Activated T-helper 1 cell treated with anti-CD3 and anti-CD28 coated beads, Interleukin-12 subunit alpha, Interleukin-12 subunit beta, Interleukin-2, Interleukin-4 antibody, amounts not matched to agents 30 ng/mL and 10 ng/mL and 1 ng/mL, durations not matched to agents 14 hours and 24 hours and 36 hours (primary cell): ENCODE measurements at regions of chr19 and their contacts with region 1.

Region 1: GRCh38 chr19:44002566-44003460 is at the start of gene ZNF230:
- DNase-seq: peak; percentile 78
- H3K4me3 Mint-ChIP-seq: peak within 1 kb of the TSS; percentile 98
- H3K27ac Mint-ChIP-seq: peak within 1 kb of the TSS; percentile 95
- H3K4me1 Mint-ChIP-seq: peaks cover 21% of the 10 kb centered on the region
- H3K27me3 Mint-ChIP-seq: no peaks in the 10 kb centered on the region
- total RNA-seq, gene ZNF230: 4.0 and 4.3 TPM in 2 replicates

Region 2: DNA sequence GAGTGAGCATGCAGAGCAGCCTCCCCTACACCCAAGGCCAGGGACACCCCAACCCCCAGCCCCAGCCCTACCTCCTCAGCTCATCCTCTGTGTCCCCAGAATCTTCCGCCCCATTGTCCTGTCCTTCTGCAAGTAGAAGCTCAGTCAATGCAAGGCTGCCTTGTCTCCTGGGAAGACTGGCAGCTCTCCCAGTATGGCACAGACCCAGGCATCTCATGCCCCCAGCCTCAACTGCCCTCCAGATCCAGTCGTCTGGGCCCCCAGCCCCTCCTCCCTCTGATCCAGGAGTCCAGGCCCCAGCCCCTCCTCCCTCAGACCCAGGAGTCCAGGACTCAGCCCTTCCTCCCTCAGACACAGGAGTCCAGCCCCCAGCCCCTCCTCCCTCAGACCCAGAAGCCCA is 456.8 kb before region 1 on chr19:
- intact Hi-C with region 1: no loop called
- DNase-seq: no peak
- H3K4me3 Mint-ChIP-seq: no peak overlapping the region
- H3K27ac Mint-ChIP-seq: no peak overlapping the region
- H3K4me1 Mint-ChIP-seq: no peaks in the 10 kb centered on the region
- H3K27me3 Mint-ChIP-seq: no peaks in the 10 kb centered on the region

Region 3: DNA sequence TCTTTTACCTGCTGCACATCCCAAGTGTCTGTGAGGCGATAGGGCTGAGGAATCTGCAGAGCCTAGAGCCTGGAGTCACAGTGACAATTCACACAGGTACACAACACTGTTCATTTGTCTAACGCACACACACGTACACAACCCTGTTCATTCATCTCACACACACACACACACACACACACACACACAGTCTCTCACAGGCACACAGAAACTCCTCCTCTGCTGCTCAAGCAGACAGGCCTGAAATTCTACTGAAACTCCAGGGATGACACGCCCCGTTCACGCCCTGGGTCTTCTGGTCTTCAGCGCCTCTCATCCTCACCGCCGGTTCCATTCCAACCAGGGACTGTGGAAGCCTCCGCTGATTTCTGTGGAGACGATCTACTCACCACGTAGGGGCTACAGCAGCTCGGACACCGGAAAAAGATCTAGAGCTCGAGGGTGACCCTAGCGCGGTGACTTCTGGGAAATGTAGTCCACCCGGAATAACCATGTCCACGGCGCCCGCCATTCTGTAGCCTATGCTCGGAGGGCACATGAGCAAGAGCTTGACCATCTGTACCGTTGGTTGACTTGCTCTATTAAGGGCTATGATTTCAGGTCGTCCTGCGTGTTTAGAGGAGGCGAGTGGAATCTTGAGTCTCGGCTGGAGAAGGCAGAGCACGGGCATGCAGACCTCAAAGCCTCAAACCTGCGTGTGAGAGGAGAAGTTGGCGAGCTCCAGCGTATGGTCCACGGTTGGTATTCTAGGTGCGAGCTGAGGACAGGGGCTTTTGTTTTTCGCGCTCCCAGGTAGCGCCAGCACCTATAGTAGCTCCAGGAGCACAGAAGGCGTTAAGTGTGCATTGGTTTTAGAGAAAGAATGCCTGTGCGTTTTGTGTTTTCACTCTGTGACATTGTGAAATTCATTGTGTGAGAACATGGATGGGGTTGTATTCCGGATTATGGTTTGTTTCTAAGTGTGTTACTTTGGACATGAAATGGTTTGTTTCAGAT is 101.1 kb before region 1 on chr19:
- intact Hi-C with region 1: loop called (anchors 5 kb)
- DNase-seq: peak; percentile 54
- H3K4me3 Mint-ChIP-seq: peak overlapping the region; percentile 81
- H3K27ac Mint-ChIP-seq: peak overlapping the region; percentile 20
- H3K4me1 Mint-ChIP-seq: peaks cover 15% of the 10 kb centered on the region
- H3K27me3 Mint-ChIP-seq: no peaks in the 10 kb centered on the region

Region 4: DNA sequence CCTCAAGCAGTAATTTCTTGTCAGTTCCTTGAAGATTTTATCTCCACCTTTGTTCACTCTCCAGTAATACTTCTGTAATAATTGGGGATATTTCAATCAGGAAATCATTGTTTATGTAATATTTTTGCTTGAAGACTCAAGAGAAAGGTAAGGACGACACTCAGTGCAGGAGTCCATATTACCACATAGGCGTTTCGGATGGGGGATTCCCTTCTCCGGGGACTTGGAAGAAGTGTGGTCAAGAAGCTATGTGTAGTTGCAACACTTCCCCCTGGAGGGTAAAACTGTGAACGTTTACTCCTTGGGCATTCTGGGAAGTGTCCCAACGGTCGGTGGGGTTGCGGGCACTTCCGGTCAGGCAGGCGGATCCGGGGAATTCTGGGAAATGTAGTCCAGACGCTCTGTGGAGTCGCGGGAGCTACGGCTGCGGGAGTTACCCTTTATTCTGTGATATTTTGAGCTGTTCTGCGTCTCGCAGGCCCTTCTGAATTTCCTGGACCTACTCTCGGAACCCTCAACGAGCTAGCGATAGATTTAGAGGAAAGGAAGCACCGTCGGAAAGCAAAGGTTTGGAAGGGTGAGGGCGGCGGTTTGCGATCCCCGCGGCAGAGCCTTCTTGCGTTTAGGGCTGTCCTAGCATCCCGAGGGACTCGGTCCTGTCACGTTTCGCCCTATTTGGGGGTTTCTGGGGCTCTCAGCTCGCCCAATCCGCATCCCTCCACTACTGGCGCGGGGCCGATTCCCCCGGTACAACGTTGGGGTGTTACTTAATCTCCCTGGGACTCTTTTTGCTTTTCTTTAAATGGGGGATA is 51.8 kb before region 1 on chr19 and contains the start of gene ZNF221:
- intact Hi-C with region 1: loop called (anchors 1 kb)
- DNase-seq: peak; percentile 50
- H3K4me3 Mint-ChIP-seq: peak within 1 kb of the TSS; percentile 94
- H3K27ac Mint-ChIP-seq: peak within 1 kb of the TSS; percentile 66
- H3K4me1 Mint-ChIP-seq: peaks cover 11% of the 10 kb centered on the region
- H3K27me3 Mint-ChIP-seq: no peaks in the 10 kb centered on the region
- total RNA-seq, gene ZNF221: 0.56 and 0.75 TPM in 2 replicates

Region 5: DNA sequence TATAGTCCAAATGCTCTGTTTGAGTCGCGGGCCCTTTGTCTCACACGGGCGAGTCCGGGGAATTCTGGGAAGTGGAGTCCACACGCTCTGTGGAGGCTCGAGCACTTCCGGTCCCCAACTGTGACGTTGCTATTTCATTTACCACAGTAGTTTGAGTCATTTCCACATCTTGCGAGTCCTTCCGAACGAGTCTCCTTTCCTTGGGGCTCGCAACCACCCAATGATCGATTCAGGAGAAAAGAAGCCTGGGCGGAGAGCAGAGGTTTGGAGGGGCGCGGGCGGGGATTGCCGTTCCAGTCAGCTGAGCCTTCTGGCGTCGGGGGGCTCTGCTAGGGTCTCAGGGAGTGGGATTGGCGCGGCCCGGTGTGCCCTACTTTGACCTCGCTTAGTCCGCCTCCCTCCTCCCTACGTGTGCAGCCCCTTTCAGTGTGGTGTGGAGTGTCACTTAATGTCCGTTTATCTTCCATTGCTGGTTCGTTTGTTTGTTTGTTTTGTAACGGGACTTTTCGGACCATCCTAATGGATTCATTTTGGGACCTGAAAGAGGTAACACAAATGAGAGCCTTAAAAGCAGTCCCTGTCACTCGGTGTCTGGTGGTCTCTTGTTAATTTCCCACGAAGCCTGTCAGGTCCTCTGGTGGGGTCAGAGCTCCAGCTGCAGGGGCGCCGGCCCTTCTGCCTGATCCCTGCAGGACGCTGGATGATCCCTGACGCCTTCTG is 22.6 kb after region 1 on chr19 and contains the start of gene ZNF222:
- intact Hi-C with region 1: loop called (anchors 1 kb)
- DNase-seq: peak; percentile 69
- H3K4me3 Mint-ChIP-seq: peak within 1 kb of the TSS; percentile 96
- H3K27ac Mint-ChIP-seq: peak within 1 kb of the TSS; percentile 85
- H3K4me1 Mint-ChIP-seq: peaks cover 18% of the 10 kb centered on the region
- H3K27me3 Mint-ChIP-seq: no peaks in the 10 kb centered on the region
- total RNA-seq, gene ZNF222: 1.2 and 1.5 TPM in 2 replicates

Region 6: DNA sequence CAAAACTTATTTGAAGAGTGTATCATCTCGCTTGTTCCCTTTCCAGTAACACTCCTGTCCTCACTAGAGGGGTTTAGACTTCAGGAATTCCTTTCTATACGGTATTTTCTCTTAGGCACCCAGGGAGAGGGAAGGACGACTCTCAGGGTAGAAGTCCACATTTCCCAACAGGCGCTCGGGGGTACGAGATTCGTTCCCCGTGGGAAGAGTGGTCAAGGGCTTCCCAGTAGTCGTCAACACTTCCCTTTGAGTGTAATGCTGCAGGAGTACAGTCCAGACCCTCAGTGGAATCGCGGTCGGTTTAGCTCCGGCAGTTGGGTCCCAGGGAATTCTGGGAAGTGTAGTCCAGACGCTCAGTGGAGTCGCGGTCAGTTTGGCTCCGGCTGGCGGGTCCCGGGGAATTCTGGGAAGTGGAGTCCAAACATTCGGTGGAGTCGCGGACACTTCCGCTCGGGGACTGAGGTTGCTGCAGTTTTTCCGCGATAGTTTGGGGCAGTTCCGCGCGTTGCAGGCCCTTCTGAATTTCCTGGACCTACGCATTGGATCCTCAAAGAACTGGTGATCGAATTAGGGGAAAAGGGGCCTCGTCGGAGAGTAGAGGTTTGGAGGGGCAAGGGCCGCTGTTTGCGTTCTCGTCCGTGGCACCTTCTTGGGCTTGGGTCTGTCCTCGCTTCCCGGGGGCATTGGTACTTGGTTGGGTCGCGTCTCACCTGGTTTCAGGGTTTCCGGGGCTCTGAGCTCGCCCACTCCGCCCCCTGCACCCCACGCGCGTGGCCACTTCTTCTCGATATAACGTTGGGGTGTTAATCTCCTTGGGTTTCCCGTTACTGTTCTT is 91.3 kb after region 1 on chr19 and contains the start of gene ZNF224:
- intact Hi-C with region 1: loop called (anchors 1 kb)
- DNase-seq: peak; percentile 73
- H3K4me3 Mint-ChIP-seq: peak within 1 kb of the TSS; percentile 98
- H3K27ac Mint-ChIP-seq: peak within 1 kb of the TSS; percentile 91
- H3K4me1 Mint-ChIP-seq: peaks cover 22% of the 10 kb centered on the region
- H3K27me3 Mint-ChIP-seq: no peaks in the 10 kb centered on the region
- total RNA-seq, gene ZNF224: 18.8 and 20.4 TPM in 2 replicates

Region 7: GRCh38 chr19:44164673-44165512 is 162.1 kb after region 1 on chr19 and contains the start of gene ZNF226:
- intact Hi-C with region 1: loop called (anchors 2 kb)
- DNase-seq: peak; percentile 71
- H3K4me3 Mint-ChIP-seq: peak within 1 kb of the TSS; percentile 90
- H3K27ac Mint-ChIP-seq: peak within 1 kb of the TSS; percentile 84
- H3K4me1 Mint-ChIP-seq: peaks cover 29% of the 10 kb centered on the region
- H3K27me3 Mint-ChIP-seq: no peaks in the 10 kb centered on the region
- total RNA-seq, gene ZNF226: 10.5 and 11.6 TPM in 2 replicates

Region 8: GRCh38 chr19:44196772-44197171 is 194.0 kb after region 1 on chr19:
- intact Hi-C with region 1: no loop called
- DNase-seq: no peak
- H3K4me3 Mint-ChIP-seq: no peak overlapping the region
- H3K27ac Mint-ChIP-seq: no peak overlapping the region
- H3K4me1 Mint-ChIP-seq: no peaks in the 10 kb centered on the region
- H3K27me3 Mint-ChIP-seq: no peaks in the 10 kb centered on the region

Region 9: GRCh38 chr19:44304659-44305193 is 301.9 kb after region 1 on chr19 and contains the start of gene ZNF235:
- intact Hi-C with region 1: loop called (anchors 1 kb)
- DNase-seq: peak; percentile 60
- H3K4me3 Mint-ChIP-seq: peak within 1 kb of the TSS; percentile 90
- H3K27ac Mint-ChIP-seq: peak within 1 kb of the TSS; percentile 34
- H3K4me1 Mint-ChIP-seq: peaks cover 20% of the 10 kb centered on the region
- H3K27me3 Mint-ChIP-seq: no peaks in the 10 kb centered on the region
- total RNA-seq, gene ZNF235: 3.8 and 4.7 TPM in 2 replicates

Region 10: DNA sequence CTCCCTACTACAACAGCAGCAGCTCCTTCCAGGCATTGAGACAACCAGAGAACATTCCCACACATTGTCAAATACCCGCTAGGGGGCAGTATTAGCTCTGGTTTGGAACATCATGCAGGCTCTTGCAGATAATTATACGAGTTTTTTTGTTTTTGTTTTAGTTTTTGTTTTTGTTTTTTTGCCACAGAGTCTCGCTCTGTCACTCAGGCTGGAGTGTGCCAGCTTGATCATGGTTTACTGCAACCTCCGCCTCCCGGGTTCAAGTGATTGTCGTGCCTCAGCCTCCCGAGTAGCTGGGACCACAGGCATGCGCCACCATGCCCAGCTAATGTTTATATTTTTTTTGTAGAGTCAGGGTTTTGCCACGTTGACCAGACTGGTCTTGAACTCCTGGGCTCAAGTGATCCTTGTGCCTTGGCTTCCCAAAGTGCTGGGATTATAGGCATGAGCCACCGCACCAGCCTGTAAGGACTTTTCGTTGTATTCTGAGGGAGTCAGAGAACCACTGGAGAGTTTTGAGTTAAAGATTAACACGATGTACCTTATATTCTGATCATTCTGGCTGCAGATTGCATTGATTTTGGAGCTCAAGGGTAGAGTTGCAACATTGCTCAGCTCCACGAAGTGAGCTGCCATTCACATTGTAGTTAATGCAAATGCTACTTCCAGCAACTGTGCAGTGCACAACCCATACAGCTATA is 568.3 kb after region 1 on chr19:
- intact Hi-C with region 1: no loop called
- DNase-seq: peak; percentile 34
- H3K4me3 Mint-ChIP-seq: no peak overlapping the region
- H3K27ac Mint-ChIP-seq: no peak overlapping the region
- H3K4me1 Mint-ChIP-seq: no peaks in the 10 kb centered on the region
- H3K27me3 Mint-ChIP-seq: peaks cover 1% of the 10 kb centered on the region